Activated B cell treated with CpG ODN at 0.5 μM for 24 hours (primary cell): ENCODE measurements at regions of chr6 and their contacts with region 1.

Region 1: GRCh38 chr6:13487122-13488014 is at the start of gene GFOD1:
- DNase-seq: peak; percentile 81
- ATAC-seq: peak; percentile 80
- H3K4me3 Mint-ChIP-seq: peak within 1 kb of the TSS; percentile 90
- H3K27ac Mint-ChIP-seq: peak within 1 kb of the TSS; percentile 85
- H3K4me1 Mint-ChIP-seq: peaks cover 44% of the 10 kb centered on the region
- H3K27me3 Mint-ChIP-seq: no peaks in the 10 kb centered on the region
- CTCF ChIP-seq: no peak
- total RNA-seq, gene GFOD1: 8.3 and 8.4 TPM in 2 replicates

Region 2: GRCh38 chr6:12844290-12845223 is 642.8 kb before region 1 on chr6:
- CTCF ChIA-PET with region 1: no interaction called
- POLR2A ChIA-PET with region 1: no interaction called
- intact Hi-C with region 1: no loop called
- DNase-seq: no peak
- ATAC-seq: no peak
- H3K4me3 Mint-ChIP-seq: no peak overlapping the region
- H3K27ac Mint-ChIP-seq: no peak overlapping the region
- H3K4me1 Mint-ChIP-seq: no peaks in the 10 kb centered on the region
- H3K27me3 Mint-ChIP-seq: peaks cover 11% of the 10 kb centered on the region
- CTCF ChIP-seq: no peak

Region 3: GRCh38 chr6:13355043-13355951 is 132.1 kb before region 1 on chr6:
- CTCF ChIA-PET with region 1: no interaction called
- POLR2A ChIA-PET with region 1: interaction called, 14 read pairs
- intact Hi-C with region 1: loop called (anchors 1 kb)
- DNase-seq: no peak
- ATAC-seq: peak; percentile 46
- H3K4me3 Mint-ChIP-seq: peak overlapping the region; percentile 70
- H3K27ac Mint-ChIP-seq: peak overlapping the region; percentile 92
- H3K4me1 Mint-ChIP-seq: peaks cover 70% of the 10 kb centered on the region
- H3K27me3 Mint-ChIP-seq: no peaks in the 10 kb centered on the region
- CTCF ChIP-seq: no peak

Region 4: GRCh38 chr6:13427801-13428582 is 59.4 kb before region 1 on chr6:
- CTCF ChIA-PET with region 1: interaction called, 3 read pairs
- POLR2A ChIA-PET with region 1: interaction called, 23 read pairs
- intact Hi-C with region 1: loop called (anchors 1 kb)
- DNase-seq: peak; percentile 58
- ATAC-seq: peak; percentile 86
- H3K4me3 Mint-ChIP-seq: peak overlapping the region; percentile 80
- H3K27ac Mint-ChIP-seq: peak overlapping the region; percentile 95
- H3K4me1 Mint-ChIP-seq: peaks cover 68% of the 10 kb centered on the region
- H3K27me3 Mint-ChIP-seq: no peaks in the 10 kb centered on the region
- CTCF ChIP-seq: no peak

Region 5: DNA sequence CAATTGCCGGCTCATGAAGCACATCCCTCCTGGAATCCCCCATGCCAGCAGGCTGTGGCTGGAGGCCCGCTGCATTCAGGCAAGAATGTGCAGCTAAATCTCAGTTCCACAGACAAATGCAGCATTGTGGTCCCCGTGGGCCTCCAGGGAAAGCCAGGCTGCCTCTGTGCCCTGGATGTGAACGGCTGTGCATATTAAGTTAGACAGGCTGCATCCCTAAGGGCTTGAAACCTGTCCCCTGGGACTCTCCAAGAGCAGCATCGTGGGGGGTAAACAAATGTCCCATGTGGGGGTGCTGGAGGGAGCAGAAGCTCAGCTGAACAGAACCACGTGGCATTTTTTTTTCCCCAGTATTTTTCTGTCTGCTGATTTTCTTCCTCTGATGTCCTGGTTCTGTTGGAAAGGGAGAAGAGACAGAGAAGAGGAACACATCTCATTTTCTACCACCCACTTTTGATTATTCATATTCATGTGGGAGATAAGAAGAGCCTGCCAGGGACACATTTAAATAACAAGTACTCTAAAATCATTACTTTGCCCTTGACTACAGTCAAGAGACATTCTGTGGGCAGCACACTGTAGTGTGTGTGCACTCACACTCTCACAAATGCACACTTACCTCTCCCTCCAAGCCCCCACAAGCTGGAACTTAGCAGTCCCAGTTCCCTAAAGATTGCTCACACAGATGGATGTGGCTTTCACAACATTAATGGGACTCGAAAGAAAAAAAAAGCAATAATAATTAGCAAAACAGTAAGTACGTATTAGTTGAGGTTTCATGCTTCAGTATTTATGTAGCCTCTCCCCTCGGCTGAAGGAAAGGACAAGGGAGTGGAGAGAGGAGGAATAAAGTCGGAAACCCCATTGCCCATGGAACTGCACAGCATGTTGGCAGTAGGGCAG is 16.9 kb before region 1 on chr6:
- CTCF ChIA-PET with region 1: no interaction called
- POLR2A ChIA-PET with region 1: interaction called, 6 read pairs
- intact Hi-C with region 1: loop called (anchors 2 kb)
- DNase-seq: no peak
- ATAC-seq: peak; percentile 21
- H3K4me3 Mint-ChIP-seq: no peak overlapping the region
- H3K27ac Mint-ChIP-seq: no peak overlapping the region
- H3K4me1 Mint-ChIP-seq: peaks cover 66% of the 10 kb centered on the region
- H3K27me3 Mint-ChIP-seq: no peaks in the 10 kb centered on the region
- CTCF ChIP-seq: no peak

Region 6: DNA sequence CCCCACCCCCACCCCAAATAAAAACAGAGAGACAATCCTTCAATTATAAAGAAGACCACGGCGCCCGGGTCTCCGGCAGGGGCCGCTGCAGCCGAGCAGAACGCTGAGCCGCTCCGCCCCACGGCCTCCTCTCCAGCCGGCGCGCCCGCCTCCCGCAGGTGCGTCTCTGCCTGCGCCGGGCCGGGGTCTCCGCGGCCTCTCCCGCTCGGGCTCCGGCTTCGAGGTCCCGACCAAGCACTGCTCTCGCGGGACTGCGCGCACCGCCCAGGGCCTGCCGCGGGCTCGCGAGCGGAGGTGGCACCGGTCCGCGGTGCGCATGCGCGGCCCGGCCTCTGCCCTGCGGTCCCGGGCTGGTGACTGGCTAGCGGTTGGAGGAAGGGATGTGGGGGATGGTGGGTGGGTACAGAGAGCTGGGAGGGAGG is 86.8 kb after region 1 on chr6:
- CTCF ChIA-PET with region 1: interaction called, 15 read pairs
- POLR2A ChIA-PET with region 1: interaction called, 22 read pairs
- intact Hi-C with region 1: loop called (anchors 1 kb)
- DNase-seq: peak; percentile 89
- ATAC-seq: peak; percentile 84
- H3K4me3 Mint-ChIP-seq: peak overlapping the region; percentile 90
- H3K27ac Mint-ChIP-seq: peak overlapping the region; percentile 94
- H3K4me1 Mint-ChIP-seq: peaks cover 23% of the 10 kb centered on the region
- H3K27me3 Mint-ChIP-seq: no peaks in the 10 kb centered on the region
- CTCF ChIP-seq: no peak

Region 7: GRCh38 chr6:13814176-13814937 is 327.0 kb after region 1 on chr6 and contains the start of gene MCUR1:
- CTCF ChIA-PET with region 1: no interaction called
- POLR2A ChIA-PET with region 1: interaction called, 3 read pairs
- intact Hi-C with region 1: loop called (anchors 2 kb)
- DNase-seq: peak; percentile 81
- ATAC-seq: peak; percentile 83
- H3K4me3 Mint-ChIP-seq: peak within 1 kb of the TSS; percentile 91
- H3K27ac Mint-ChIP-seq: peak within 1 kb of the TSS; percentile 87
- H3K4me1 Mint-ChIP-seq: peaks cover 32% of the 10 kb centered on the region
- H3K27me3 Mint-ChIP-seq: no peaks in the 10 kb centered on the region
- CTCF ChIP-seq: no peak
- total RNA-seq, gene MCUR1: 13.6 and 14.1 TPM in 2 replicates